BJ (cell line): ENCODE measurements at regions of chr1 and their contacts with region 1.

Region 1: DNA sequence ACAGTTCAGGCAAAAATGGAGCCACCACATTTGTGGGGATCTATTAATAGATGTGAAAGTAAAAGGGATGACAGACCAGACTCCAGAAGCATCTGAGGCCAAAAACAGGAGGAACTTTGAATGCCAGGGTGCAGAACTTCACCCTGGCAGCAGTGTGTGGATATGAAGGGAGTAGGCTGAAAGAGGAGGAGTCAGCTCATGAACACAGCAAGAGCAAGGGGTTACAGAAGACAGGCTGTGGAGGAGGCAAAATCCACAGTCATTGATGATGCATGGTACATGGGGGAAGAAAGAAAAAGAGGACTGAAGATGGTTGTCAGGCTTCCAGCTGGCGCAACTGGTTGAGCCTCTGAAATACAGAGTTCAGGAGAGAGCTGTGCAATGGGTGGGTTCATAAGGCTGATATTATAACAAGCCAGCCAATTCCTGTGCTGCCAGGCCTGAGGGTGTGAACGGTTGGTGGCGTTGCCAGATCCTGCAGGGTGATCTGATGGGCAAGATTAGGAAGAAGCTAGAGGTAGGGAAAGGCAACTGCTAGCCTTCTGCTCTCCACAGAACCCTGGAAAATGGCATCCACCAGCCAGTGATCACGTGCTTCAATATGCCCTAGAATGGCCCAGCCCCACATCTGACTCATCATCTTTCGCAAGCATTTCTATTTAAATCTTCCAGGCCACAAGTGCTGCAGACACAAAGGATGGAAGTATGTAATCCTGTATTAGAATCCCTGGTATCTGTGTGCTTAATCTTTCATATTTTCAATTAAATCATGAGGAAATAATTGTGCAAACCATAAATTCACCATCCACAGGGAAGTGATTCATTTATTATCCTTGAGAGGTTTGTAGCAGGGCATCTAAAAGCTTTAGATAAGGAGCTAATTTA is 81.9 kb downstream of the SLC25A24 start:
- DNase-seq: peak; percentile 47
- H3K4me3 ChIP-seq: no peak overlapping the region
- H3K27me3 ChIP-seq: no peaks in the 10 kb centered on the region; the same call in 1 of the 2 replicates
- CTCF ChIP-seq: no peak

Region 2: GRCh38 chr1:107782217-107782845 is 335.9 kb before region 1 on chr1:
- CTCF ChIA-PET with region 1: interaction called, 251 read pairs
- POLR2A ChIA-PET with region 1: no interaction called
- DNase-seq: peak; percentile 3
- H3K4me3 ChIP-seq: no peak overlapping the region
- H3K27me3 ChIP-seq: no peaks in the 10 kb centered on the region
- CTCF ChIP-seq: peak; percentile 61

Region 3: GRCh38 chr1:108100148-108100547 is 18.1 kb before region 1 on chr1:
- CTCF ChIA-PET with region 1: no interaction called
- POLR2A ChIA-PET with region 1: no interaction called
- DNase-seq: no peak
- H3K4me3 ChIP-seq: no peak overlapping the region
- H3K27me3 ChIP-seq: peaks cover 4% of the 10 kb centered on the region; the same call in 1 of the 2 replicates
- CTCF ChIP-seq: no peak

Region 4: DNA sequence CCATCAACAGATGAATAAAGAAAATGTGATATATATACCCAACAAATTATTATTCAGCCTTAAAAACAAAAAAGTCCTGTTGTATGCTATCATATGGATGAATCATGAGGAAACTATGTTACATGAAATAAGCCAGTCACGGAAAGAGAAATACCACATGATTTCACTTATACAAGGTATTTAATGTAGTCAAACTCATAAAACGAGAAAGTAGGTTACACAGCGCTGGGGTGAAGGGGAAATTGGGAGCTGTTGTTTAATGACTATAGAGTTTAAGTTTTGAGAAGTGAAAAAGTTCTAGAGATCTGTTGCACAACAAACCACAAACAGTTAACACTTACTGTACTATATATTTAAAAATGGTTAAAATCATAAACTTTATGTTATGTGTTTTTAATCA is 23.4 kb after region 1 on chr1:
- CTCF ChIA-PET with region 1: no interaction called
- POLR2A ChIA-PET with region 1: no interaction called
- DNase-seq: no peak
- H3K4me3 ChIP-seq: no peak overlapping the region
- H3K27me3 ChIP-seq: no peaks in the 10 kb centered on the region
- CTCF ChIP-seq: no peak